Activated T-helper 1 cell treated with anti-CD3 and anti-CD28 coated beads, Interleukin-12 subunit alpha, Interleukin-12 subunit beta, Interleukin-2, Interleukin-4 antibody, amounts not matched to agents 30 ng/mL and 10 ng/mL and 1 ng/mL, durations not matched to agents 14 hours and 24 hours and 36 hours (primary cell): ENCODE measurements at regions of chr14 and their contacts with region 1.

Region 1: GRCh38 chr14:75542588-75543091 is 20.4 kb downstream of the BATF start:
- DNase-seq: peak; percentile 83
- H3K4me3 Mint-ChIP-seq: peak overlapping the region; percentile 64
- H3K27ac Mint-ChIP-seq: peak overlapping the region; percentile 95
- H3K4me1 Mint-ChIP-seq: peaks cover 77% of the 10 kb centered on the region
- H3K27me3 Mint-ChIP-seq: no peaks in the 10 kb centered on the region

Region 2: DNA sequence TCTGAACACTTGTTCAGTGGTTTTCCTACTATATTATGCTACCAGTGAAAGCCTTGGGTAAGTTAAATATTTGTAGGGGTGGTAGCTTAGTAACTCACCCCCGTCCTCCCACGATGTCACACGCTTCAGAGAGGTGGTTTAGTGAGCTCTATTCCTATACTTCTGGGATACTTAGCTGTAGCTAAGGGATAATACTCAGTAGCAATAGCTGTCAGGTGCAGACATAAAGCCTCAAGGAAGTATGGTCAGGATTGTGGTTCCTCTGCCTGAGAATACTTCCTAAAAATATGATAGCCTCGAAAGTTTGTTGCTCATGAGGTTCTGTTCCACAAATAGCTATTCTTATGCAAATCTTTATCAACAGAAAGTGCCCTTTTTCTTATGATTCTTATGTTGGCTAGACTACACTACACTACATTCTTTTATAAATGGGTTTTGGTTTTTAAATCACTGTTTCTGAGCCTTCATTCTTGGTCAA is 649.0 kb before region 1 on chr14:
- intact Hi-C with region 1: no loop called
- DNase-seq: no peak
- H3K4me3 Mint-ChIP-seq: no peak overlapping the region
- H3K27ac Mint-ChIP-seq: no peak overlapping the region
- H3K4me1 Mint-ChIP-seq: no peaks in the 10 kb centered on the region
- H3K27me3 Mint-ChIP-seq: no peaks in the 10 kb centered on the region

Region 3: DNA sequence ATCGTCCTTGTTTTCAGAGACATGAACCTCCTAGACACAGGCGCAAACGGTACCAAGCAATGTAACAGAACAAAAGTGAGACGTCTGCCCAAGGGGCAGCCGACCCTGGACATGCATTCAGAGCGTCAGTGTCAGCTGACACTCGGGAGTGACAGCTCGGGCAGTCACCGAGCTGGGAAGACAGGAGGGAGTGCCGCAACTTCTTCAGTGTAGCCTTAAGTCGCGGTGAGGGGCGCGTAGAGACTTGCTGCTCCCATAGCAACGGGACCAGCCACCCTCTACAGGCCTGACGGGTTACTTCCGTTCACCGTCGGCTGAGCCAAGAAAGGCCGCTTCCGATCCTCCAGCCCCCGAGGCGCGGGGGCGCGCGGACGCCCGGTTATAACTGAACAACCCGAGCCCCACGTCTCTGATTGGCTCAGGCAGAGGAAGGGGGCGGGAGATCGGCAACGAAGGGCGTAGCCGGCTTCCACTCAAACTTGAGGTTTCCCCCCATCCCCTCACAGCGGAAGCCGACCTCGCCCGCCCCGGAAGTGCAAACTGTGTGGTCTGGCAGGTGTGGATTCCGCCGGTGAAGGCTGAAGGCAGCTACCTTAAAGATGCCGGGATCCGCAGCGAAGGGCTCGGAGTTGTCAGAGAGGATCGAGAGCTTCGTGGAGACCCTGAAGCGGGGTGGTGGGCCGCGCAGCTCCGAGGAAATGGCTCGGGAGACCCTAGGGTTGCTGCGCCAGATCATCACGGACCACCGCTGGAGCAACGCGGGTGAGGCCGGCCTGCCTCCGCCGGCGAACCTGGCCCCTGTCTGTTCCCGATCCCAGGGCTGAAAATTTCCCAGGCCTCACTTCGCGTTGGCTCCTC is 540.0 kb before region 1 on chr14 and contains the start of gene EIF2B2:
- intact Hi-C with region 1: loop called (anchors 5 kb)
- DNase-seq: peak; percentile 99
- H3K4me3 Mint-ChIP-seq: peak within 1 kb of the TSS; percentile 98
- H3K27ac Mint-ChIP-seq: peak within 1 kb of the TSS; percentile 92
- H3K4me1 Mint-ChIP-seq: peaks cover 54% of the 10 kb centered on the region
- H3K27me3 Mint-ChIP-seq: peaks cover 10% of the 10 kb centered on the region
- total RNA-seq, gene EIF2B2: 52.8 and 54.3 TPM in 2 replicates

Region 4: GRCh38 chr14:75487155-75487671 is 55.4 kb before region 1 on chr14:
- intact Hi-C with region 1: loop called (anchors 1 kb)
- DNase-seq: peak; percentile 43
- H3K4me3 Mint-ChIP-seq: no peak overlapping the region
- H3K27ac Mint-ChIP-seq: peak overlapping the region; percentile 72
- H3K4me1 Mint-ChIP-seq: peaks cover 47% of the 10 kb centered on the region
- H3K27me3 Mint-ChIP-seq: no peaks in the 10 kb centered on the region

Region 5: GRCh38 chr14:75522224-75522982 is 20.2 kb before region 1 on chr14 and contains the start of gene BATF:
- intact Hi-C with region 1: loop called (anchors 1 kb)
- DNase-seq: peak; percentile 79
- H3K4me3 Mint-ChIP-seq: peak within 1 kb of the TSS; percentile 96
- H3K27ac Mint-ChIP-seq: peak within 1 kb of the TSS; percentile 95
- H3K4me1 Mint-ChIP-seq: peaks cover 71% of the 10 kb centered on the region
- H3K27me3 Mint-ChIP-seq: no peaks in the 10 kb centered on the region
- total RNA-seq, gene BATF: 213 and 214 TPM in 2 replicates

Region 6: GRCh38 chr14:75566321-75566720 is 23.7 kb after region 1 on chr14:
- intact Hi-C with region 1: loop called (anchors 1 kb)
- DNase-seq: peak; percentile 68
- H3K4me3 Mint-ChIP-seq: peak overlapping the region; percentile 66
- H3K27ac Mint-ChIP-seq: peak overlapping the region; percentile 87
- H3K4me1 Mint-ChIP-seq: peaks cover 76% of the 10 kb centered on the region
- H3K27me3 Mint-ChIP-seq: no peaks in the 10 kb centered on the region

Region 7: DNA sequence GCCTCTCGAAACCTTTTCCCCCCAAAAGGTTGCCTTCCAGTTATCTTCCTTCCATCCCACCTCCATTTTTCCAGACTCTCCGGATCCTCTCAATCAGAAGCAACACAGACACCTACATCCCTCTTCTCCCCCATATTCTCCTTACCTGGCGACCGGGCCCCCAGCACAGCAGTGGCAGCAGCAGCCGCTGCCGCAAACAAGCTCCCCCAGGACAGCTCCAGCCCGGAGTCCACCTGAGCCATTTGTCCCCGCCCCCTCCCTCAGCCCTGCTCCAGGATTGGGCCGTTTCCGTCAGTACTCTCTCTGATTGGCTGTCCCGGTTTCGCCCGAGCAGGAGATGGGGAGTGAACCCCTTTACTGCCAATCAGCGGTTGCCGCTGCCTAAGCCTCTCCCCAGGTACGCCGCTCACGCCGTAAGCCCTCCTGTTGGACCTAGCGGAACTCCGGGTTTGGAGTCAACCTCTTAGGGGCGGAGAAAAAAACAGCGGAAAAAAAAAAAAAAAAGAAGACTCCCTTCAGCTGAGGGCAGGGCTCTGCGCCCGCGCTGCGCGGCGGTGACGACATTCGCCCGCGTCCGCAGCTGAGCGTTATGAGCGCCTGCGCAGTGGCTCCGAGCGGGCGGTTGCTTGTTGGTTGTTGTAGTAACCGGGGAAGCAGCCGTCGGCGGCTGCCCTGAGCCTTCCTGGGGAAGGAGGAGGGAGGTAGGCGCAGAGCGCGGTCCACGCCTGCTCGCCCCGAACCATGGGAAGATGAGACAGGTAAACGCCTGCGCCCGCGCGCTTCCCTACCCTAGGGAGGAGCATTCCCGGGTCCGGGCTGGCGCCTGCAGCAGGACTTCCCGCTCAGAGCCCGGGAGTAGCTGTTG is 118.2 kb after region 1 on chr14 and contains the starts of genes ERG28 and TTLL5:
- intact Hi-C with region 1: loop called (anchors 1 kb)
- DNase-seq: peak; percentile 97
- H3K4me3 Mint-ChIP-seq: peak within 1 kb of the TSS; percentile 100
- H3K27ac Mint-ChIP-seq: peak within 1 kb of the TSS; percentile 94
- H3K4me1 Mint-ChIP-seq: peaks cover 38% of the 10 kb centered on the region
- H3K27me3 Mint-ChIP-seq: no peaks in the 10 kb centered on the region
- total RNA-seq, gene ERG28: 17.5 and 17.8 TPM in 2 replicates
- total RNA-seq, gene TTLL5: 36.2 and 39.0 TPM in 2 replicates